Right cardiac atrium (tissue), 5 donors: ENCODE measurements at regions of chr6 and their contacts with region 1.

Region 1: DNA sequence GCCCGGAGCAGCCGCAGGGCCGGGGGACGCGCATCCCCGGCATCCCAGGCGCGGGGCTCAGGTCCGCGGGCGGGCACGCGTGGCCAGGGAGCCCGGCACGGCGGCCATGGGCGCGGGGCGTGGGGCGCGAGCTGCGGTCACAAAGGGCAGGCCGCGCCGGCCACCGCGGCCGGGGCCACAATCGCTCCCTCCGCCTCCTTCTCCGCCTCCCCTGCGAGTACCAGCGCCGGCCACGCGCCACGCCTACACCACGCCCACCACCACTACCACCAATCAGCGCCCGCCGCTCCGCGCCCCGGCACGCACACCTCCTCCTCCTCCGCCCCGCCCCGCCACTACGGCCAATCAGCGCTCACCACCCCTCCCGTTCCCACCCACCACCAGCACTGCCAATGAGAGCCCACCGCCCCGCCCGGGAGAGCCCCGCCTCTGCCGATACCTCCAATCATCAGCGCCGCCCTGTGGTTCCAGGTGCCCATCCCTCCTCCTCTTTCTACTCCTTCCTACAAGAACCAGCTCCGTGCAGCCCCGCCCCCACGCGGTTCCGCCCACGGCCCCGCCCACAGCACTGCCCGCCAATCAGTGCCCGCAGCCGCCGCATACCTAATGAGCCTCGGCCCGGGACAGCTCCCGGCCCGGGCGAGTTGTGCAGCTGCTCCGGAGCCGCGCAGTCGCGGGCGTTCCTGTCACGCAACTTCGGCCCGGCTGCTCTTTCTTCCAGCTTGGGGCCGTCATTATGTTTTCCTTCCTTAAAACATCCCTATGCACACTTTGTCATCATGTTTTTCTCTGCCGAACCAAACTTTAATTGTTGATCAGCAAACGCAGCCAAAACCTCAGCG is at the start of gene RPS6KA2:
- DNase-seq: peak; percentile 100
- ATAC-seq: peak; percentile 96 to 97
- H3K4me3 ChIP-seq: peak within 1 kb of the TSS; percentile 82
- H3K27ac ChIP-seq: peak within 1 kb of the TSS; percentile 97
- H3K4me1 ChIP-seq: peaks cover 14% of the 10 kb centered on the region
- H3K27me3 ChIP-seq: no peaks in the 10 kb centered on the region
- total RNA-seq, gene RPS6KA2: 53.1 to 80.9 (median 67.9) TPM

Region 2: GRCh38 chr6:166556871-166557322 is 70.4 kb before region 1 on chr6:
- intact Hi-C with region 1: loop called in 2 of 4 experiments (anchors 10 kb)
- DNase-seq: peak; percentile 79 to 90 (median 87)
- ATAC-seq: peak; percentile 93 to 96
- H3K4me3 ChIP-seq: no peak overlapping the region
- H3K27ac ChIP-seq: peak overlapping the region; percentile 0
- H3K4me1 ChIP-seq: peaks cover 8% of the 10 kb centered on the region
- H3K27me3 ChIP-seq: no peaks in the 10 kb centered on the region